Esophagus squamous epithelium (tissue), 5 donors: ENCODE measurements at regions of chr14 and their contacts with region 1.

Region 1: DNA sequence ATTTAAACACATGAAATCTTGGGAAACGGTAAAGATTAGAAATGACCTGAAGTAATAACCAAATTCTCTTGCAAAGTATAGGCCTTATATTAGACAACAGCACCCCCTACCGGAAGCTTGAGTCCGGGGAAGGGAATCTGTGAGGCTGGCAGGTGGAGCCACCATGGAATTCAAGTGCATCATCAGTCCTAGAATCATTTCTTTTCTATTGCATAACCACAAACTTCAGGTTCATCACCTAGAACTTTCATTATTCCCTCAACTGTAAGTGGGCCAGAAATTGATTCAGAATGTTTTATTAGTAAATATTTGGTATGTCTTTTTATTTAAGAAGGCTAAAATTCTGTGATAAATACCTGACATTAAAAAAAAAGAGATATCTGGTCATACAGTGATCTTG is 48.5 kb downstream of the AP5M1 start:
- DNase-seq: no peak
- H3K4me3 ChIP-seq: no peak overlapping the region
- H3K27ac ChIP-seq: no peak overlapping the region
- H3K4me1 ChIP-seq: no peaks in the 10 kb centered on the region
- H3K27me3 ChIP-seq: peaks cover 0 to 25% (median 0%) of the 10 kb centered on the region in 4 donors
- CTCF ChIP-seq: peak; percentile 65 to 81 (median 74)
- POLR2A ChIP-seq: no peak

Region 2: DNA sequence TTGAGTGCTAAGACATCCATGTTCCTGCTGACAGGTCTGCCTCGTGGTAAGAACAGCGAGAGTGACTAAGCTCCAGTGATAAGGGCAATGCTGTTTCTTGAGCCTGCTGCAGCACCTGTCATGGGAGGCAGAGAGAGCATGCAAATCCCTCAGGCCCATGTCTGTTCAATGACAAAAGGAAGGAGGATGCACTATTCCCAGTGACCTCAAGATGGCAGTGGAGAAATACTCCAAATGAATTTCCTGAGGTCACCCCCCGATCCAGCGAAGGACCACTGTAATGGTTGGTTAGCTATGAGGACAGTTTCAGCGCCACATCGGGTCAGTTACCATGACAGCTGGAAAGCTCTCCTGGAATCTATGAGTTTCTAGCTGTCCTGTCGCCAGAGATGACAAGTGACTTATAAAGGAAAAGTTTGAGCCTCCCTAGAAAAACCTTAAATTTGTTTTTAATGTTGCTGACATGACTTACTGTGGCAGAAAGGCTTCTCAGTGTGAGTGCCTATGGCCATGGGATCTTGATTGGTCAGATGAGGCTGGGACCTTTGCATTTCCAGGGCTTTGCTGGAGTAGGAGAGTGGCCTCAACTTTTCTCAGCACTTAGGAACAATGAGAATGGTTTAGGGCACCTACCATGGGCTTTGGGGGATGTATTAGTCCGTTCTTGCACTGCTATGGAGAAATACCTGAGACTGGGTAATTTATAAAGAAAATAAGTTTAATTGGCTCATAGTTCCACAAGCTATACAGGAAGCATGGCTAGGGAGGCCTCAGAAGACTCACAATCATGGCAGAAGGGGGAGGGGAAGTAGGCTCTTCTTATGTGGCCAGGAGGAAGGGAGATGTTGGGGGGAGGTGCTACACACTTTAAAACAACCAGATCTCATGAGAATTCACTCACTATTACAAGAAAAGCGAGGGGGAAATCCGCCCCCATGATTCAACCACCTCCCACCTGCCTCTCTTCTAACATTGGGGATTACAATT is 825.7 kb before region 1 on chr14:
- intact Hi-C with region 1: loop called (anchors 10 kb)
- DNase-seq: no peak
- H3K4me3 ChIP-seq: no peak overlapping the region
- H3K27ac ChIP-seq: no peak overlapping the region
- H3K4me1 ChIP-seq: peaks cover 0 to 5% (median 0%) of the 10 kb centered on the region in 3 donors
- H3K27me3 ChIP-seq: peaks cover 0 to 5% (median 0%) of the 10 kb centered on the region in 4 donors
- CTCF ChIP-seq: peak in 5 of 6 experiments; percentile 43 to 58 (median 49)
- POLR2A ChIP-seq: no peak

Region 3: GRCh38 chr14:57209561-57209960 is 107.8 kb before region 1 on chr14:
- intact Hi-C with region 1: no loop called
- DNase-seq: no peak
- H3K4me3 ChIP-seq: no peak overlapping the region
- H3K27ac ChIP-seq: no peak overlapping the region
- H3K4me1 ChIP-seq: no peaks in the 10 kb centered on the region
- H3K27me3 ChIP-seq: no peaks in the 10 kb centered on the region
- CTCF ChIP-seq: no peak
- POLR2A ChIP-seq: no peak

Region 4: DNA sequence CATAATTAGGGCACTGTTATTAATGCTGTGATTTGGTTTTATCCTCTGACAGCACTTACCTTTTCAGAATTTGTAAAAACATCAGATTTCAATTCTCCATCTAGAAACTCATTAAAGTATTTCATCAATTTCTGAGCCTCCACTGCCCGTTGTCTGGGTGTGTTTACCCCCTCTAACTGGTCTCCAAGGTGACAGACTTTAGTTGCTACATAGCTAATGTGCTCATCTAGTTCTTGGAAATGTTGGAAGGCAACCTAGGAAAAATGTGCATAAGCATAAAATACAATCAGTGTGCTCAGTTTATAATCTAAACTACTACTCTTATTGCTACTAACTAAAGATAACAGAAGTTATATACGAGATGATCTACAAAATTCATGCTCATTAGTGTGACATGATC is 73.2 kb before region 1 on chr14:
- intact Hi-C with region 1: no loop called
- DNase-seq: no peak
- H3K4me3 ChIP-seq: no peak overlapping the region
- H3K27ac ChIP-seq: no peak overlapping the region
- H3K4me1 ChIP-seq: no peaks in the 10 kb centered on the region
- H3K27me3 ChIP-seq: no peaks in the 10 kb centered on the region
- CTCF ChIP-seq: no peak
- POLR2A ChIP-seq: no peak